Breast epithelium (tissue), 4 donors: ENCODE measurements at regions of chr9 and their contacts with region 1.

Region 1: GRCh38 chr9:122291458-122291857 is 26.8 kb downstream of the MRRF start:
- DNase-seq: no peak
- H3K4me3 ChIP-seq: no peak overlapping the region
- H3K27ac ChIP-seq: no peak overlapping the region
- H3K4me1 ChIP-seq: no peaks in the 10 kb centered on the region
- H3K27me3 ChIP-seq: no peaks in the 10 kb centered on the region
- CTCF ChIP-seq: no peak
- POLR2A ChIP-seq: no peak

Region 2: GRCh38 chr9:122125158-122125508 is 166.3 kb before region 1 on chr9:
- intact Hi-C with region 1: no loop called
- DNase-seq: peak; percentile 65 to 83
- H3K4me3 ChIP-seq: no peak overlapping the region
- H3K27ac ChIP-seq: no peak overlapping the region
- H3K4me1 ChIP-seq: no peaks in the 10 kb centered on the region
- H3K27me3 ChIP-seq: peaks cover 0 to 26% of the 10 kb centered on the region in 2 donors
- CTCF ChIP-seq: peak; percentile 83 to 95 (median 95)
- POLR2A ChIP-seq: no peak

Region 3: DNA sequence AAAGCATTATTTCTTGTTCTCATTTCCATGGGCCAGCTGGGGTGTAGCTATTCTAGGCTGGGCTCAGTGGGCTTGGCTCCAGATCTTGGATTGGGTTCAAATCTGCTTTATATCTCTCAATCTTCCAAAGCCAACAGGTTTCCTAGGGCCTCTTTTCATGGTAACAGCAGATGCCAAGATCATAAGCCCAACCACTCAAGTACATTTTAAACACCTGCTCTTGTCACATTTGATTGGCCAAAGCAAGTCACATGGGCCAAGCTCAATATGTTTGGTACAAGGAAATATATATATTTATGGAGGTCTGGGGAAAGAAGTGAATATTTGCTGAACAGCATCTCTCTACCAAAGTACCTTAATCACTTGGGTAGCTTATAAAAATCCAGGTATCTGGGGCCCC is 22.7 kb after region 1 on chr9:
- intact Hi-C with region 1: loop called (anchors 2 kb)
- DNase-seq: no peak
- H3K4me3 ChIP-seq: no peak overlapping the region
- H3K27ac ChIP-seq: no peak overlapping the region
- H3K4me1 ChIP-seq: no peaks in the 10 kb centered on the region
- H3K27me3 ChIP-seq: no peaks in the 10 kb centered on the region
- CTCF ChIP-seq: no peak
- POLR2A ChIP-seq: no peak

Region 4: DNA sequence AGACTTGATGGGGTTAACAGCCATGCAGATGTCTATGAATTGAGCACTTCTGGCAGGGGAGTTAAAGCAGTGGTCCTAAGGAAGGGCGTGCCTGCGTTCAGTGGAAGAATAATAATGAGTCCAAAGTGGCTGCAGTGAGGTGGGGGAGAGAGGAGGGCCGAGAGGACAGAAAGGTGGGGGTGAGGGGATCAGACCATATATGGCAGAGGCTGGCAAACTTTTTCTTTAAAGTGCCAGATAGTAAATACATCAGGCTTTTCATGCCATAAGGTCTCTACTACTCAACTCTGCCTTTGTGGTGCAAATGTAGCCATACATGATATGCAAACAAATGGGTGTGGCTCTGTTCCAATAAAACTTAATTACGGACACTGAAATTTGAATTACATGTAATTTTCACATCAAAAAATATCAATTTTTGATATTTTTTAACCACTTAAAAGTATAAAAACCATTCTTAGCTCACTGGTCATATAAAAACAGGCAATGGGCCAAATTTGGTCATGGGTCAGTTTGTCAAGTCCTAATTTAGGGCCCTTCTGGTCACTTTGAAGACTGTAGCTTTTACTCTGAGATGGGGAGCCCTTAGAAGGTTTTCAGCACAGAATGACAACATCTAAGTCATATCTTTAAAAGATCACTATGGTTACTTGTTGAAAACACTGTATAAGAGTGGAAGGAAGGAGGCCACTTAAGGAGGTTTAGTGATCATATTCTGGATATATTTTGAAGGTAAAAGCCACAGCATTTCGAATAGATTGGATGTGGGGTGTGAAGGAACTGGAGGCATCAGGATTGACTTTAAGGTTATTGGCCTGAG is 900.0 kb after region 1 on chr9:
- intact Hi-C with region 1: no loop called
- DNase-seq: no peak
- H3K4me3 ChIP-seq: no peak overlapping the region
- H3K27ac ChIP-seq: no peak overlapping the region
- H3K4me1 ChIP-seq: no peaks in the 10 kb centered on the region
- H3K27me3 ChIP-seq: no peaks in the 10 kb centered on the region
- CTCF ChIP-seq: no peak
- POLR2A ChIP-seq: no peak